Activated CD4-positive, alpha-beta T cell treated with anti-CD3 and anti-CD28 coated beads, Interleukin-2, amount 10 ng/mL, durations not matched to agents 7 days and 5 days (primary cell): ENCODE measurements at regions of chr17 and their contacts with region 1.

Region 1: GRCh38 chr17:50361561-50362480 is 11.2 kb downstream of the MRPL27 start:
- DNase-seq: peak; percentile 70
- H3K4me3 Mint-ChIP-seq: no peak overlapping the region
- H3K27ac Mint-ChIP-seq: peak overlapping the region; percentile 61
- H3K4me1 Mint-ChIP-seq: peaks cover 8% of the 10 kb centered on the region
- H3K27me3 Mint-ChIP-seq: no peaks in the 10 kb centered on the region

Region 2: GRCh38 chr17:50129728-50130558 is 231.9 kb before region 1 on chr17 and contains the start of gene SAMD14:
- CTCF ChIA-PET with region 1: no interaction called
- POLR2A ChIA-PET with region 1: no interaction called
- DNase-seq: peak; percentile 52
- H3K4me3 Mint-ChIP-seq: peak within 1 kb of the TSS; percentile 51
- H3K27ac Mint-ChIP-seq: peak within 1 kb of the TSS; percentile 81
- H3K4me1 Mint-ChIP-seq: peaks cover 25% of the 10 kb centered on the region
- H3K27me3 Mint-ChIP-seq: peaks cover 37% of the 10 kb centered on the region
- total RNA-seq, gene SAMD14: 0.07 to 0.23 TPM

Region 3: GRCh38 chr17:50345432-50346312 is 16.1 kb before region 1 on chr17 and contains the start of gene XYLT2:
- CTCF ChIA-PET with region 1: interaction called, 28 read pairs
- POLR2A ChIA-PET with region 1: no interaction called
- DNase-seq: peak; percentile 90
- H3K4me3 Mint-ChIP-seq: peak within 1 kb of the TSS; percentile 88
- H3K27ac Mint-ChIP-seq: peak within 1 kb of the TSS; percentile 96
- H3K4me1 Mint-ChIP-seq: peaks cover 35% of the 10 kb centered on the region
- H3K27me3 Mint-ChIP-seq: no peaks in the 10 kb centered on the region
- total RNA-seq, gene XYLT2: 22.1 to 23.6 TPM

Region 4: GRCh38 chr17:50372758-50373556 is 11.1 kb after region 1 on chr17 and contains the starts of genes EME1 and MRPL27:
- CTCF ChIA-PET with region 1: interaction called, 17 read pairs
- POLR2A ChIA-PET with region 1: no interaction called
- DNase-seq: peak; percentile 91
- H3K4me3 Mint-ChIP-seq: peak within 1 kb of the TSS; percentile 96
- H3K27ac Mint-ChIP-seq: peak within 1 kb of the TSS; percentile 100
- H3K4me1 Mint-ChIP-seq: peaks cover 31% of the 10 kb centered on the region
- H3K27me3 Mint-ChIP-seq: no peaks in the 10 kb centered on the region
- total RNA-seq, gene EME1: 19.9 to 21.8 TPM
- total RNA-seq, gene MRPL27: 62.9 to 71.4 TPM

Region 5: GRCh38 chr17:50501054-50501453 is 139.2 kb after region 1 on chr17:
- CTCF ChIA-PET with region 1: no interaction called
- POLR2A ChIA-PET with region 1: no interaction called
- DNase-seq: peak; percentile 35
- H3K4me3 Mint-ChIP-seq: no peak overlapping the region
- H3K27ac Mint-ChIP-seq: no peak overlapping the region
- H3K4me1 Mint-ChIP-seq: peaks cover 21% of the 10 kb centered on the region
- H3K27me3 Mint-ChIP-seq: peaks cover 7% of the 10 kb centered on the region